Activated CD4-positive, alpha-beta T cell treated with anti-CD3 and anti-CD28 coated beads for 36 hours (primary cell): ENCODE measurements at regions of chrX and their contacts with region 1.

Region 1: GRCh38 chrX:14039344-14039743 is 9.7 kb upstream of the GEMIN8 start:
- DNase-seq: peak; percentile 71
- ATAC-seq: peak; percentile 68
- H3K4me3 Mint-ChIP-seq: no peak overlapping the region
- H3K27ac Mint-ChIP-seq: no peak overlapping the region
- H3K4me1 Mint-ChIP-seq: no peaks in the 10 kb centered on the region
- H3K27me3 Mint-ChIP-seq: no peaks in the 10 kb centered on the region

Region 2: DNA sequence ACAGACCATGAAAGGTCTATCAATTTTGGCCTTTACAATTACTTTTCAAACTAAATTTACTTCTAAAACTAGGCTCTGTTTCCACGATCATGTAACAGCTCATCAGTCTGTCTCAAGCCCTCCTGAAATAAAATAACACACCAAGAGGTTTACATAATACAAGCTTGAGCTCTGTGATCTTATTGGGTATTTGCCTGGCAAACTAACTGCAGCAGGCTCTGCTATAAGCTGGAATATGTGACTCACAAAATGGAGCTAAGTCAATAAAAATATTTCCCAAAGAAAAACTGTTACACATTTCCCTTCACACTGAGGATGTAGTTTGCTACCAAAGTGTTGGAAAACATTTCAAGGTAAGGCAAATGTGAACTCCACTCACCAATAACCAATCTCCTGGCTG is 127.8 kb before region 1 on chrX:
- CTCF ChIA-PET with region 1: no interaction called
- POLR2A ChIA-PET with region 1: no interaction called
- intact Hi-C with region 1: no loop called
- DNase-seq: no peak
- ATAC-seq: no peak
- H3K4me3 Mint-ChIP-seq: no peak overlapping the region
- H3K27ac Mint-ChIP-seq: no peak overlapping the region
- H3K4me1 Mint-ChIP-seq: no peaks in the 10 kb centered on the region
- H3K27me3 Mint-ChIP-seq: no peaks in the 10 kb centered on the region

Region 3: GRCh38 chrX:13966071-13966792 is 73.1 kb before region 1 on chrX:
- CTCF ChIA-PET with region 1: no interaction called
- POLR2A ChIA-PET with region 1: no interaction called
- intact Hi-C with region 1: no loop called
- DNase-seq: no peak
- ATAC-seq: no peak
- H3K4me3 Mint-ChIP-seq: no peak overlapping the region
- H3K27ac Mint-ChIP-seq: no peak overlapping the region
- H3K4me1 Mint-ChIP-seq: no peaks in the 10 kb centered on the region
- H3K27me3 Mint-ChIP-seq: no peaks in the 10 kb centered on the region

Region 4: GRCh38 chrX:14095702-14096101 is 56.4 kb after region 1 on chrX:
- CTCF ChIA-PET with region 1: no interaction called
- POLR2A ChIA-PET with region 1: no interaction called
- intact Hi-C with region 1: loop called in 1 of 2 experiments (anchors 2 kb)
- DNase-seq: peak; percentile 59
- ATAC-seq: peak; percentile 63
- H3K4me3 Mint-ChIP-seq: no peak overlapping the region
- H3K27ac Mint-ChIP-seq: no peak overlapping the region
- H3K4me1 Mint-ChIP-seq: no peaks in the 10 kb centered on the region
- H3K27me3 Mint-ChIP-seq: peaks cover under 1% of the 10 kb centered on the region

Region 5: DNA sequence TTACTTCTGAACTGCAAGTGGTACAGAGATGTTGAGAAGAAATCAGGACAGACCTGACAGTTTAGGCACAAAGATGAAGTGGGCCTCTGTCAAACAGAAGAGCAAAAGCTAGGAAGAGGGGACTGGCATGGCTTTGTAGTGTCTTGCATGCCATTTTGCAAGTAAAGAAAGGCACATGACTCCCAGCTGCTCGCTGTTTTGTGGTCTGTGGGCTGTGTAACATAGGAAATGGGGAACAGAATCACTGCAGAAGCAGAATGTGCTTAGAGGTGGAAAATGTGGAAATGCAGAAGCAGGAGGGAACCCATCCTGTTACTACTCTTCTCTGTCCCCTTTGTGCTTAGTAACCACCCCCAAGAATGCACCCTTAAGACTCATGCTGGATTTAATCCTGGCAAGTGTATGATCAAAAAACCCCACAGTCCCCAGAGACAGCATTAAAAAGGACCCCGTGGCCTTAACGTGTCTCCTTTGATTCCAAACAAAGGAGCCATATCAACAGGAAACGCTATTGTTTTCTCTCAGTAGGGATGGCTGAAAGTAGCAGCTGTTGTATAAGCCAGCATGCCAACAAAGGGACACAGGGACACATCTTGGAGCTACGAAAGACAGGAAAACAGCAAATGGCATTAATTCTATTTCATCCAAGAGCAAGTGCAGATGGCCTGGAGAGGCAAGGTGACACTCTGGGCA is 312.4 kb after region 1 on chrX:
- CTCF ChIA-PET with region 1: no interaction called
- POLR2A ChIA-PET with region 1: no interaction called
- intact Hi-C with region 1: no loop called
- DNase-seq: no peak
- ATAC-seq: no peak
- H3K4me3 Mint-ChIP-seq: no peak overlapping the region
- H3K27ac Mint-ChIP-seq: no peak overlapping the region
- H3K4me1 Mint-ChIP-seq: peaks cover 3% of the 10 kb centered on the region
- H3K27me3 Mint-ChIP-seq: no peaks in the 10 kb centered on the region

Region 6: GRCh38 chrX:14528629-14529289 is 489.4 kb after region 1 on chrX:
- CTCF ChIA-PET with region 1: no interaction called
- POLR2A ChIA-PET with region 1: no interaction called
- intact Hi-C with region 1: loop called in 1 of 2 experiments (anchors 1 kb)
- DNase-seq: peak; percentile 73
- ATAC-seq: peak; percentile 30
- H3K4me3 Mint-ChIP-seq: no peak overlapping the region
- H3K27ac Mint-ChIP-seq: no peak overlapping the region
- H3K4me1 Mint-ChIP-seq: no peaks in the 10 kb centered on the region
- H3K27me3 Mint-ChIP-seq: peaks cover 4% of the 10 kb centered on the region